H1 (cell line): ENCODE measurements at regions of chr6 and their contacts with region 1.

Region 1: GRCh38 chr6:10555625-10556309 is 34.6 kb downstream of the GCNT2 start:
- DNase-seq: peak; percentile 56 to 70
- H3K4me3 ChIP-seq: peak overlapping the region; percentile 81 to 96 (median 87)
- H3K27ac ChIP-seq: peak overlapping the region; percentile 83
- H3K4me1 ChIP-seq: peaks cover 2 to 12% (median 5%) of the 10 kb centered on the region in 4 experiments; a peak in 6 of 7 replicates
- H3K27me3 ChIP-seq: no peaks in the 10 kb centered on the region
- CTCF ChIP-seq: no peak
- EP300 ChIP-seq: no peak
- POLR2A ChIP-seq: peak; percentile 7 to 69; a peak in 2 of 3 replicates
- RAD21 ChIP-seq: no peak

Region 2: GRCh38 chr6:10338151-10338550 is 217.6 kb before region 1 on chr6:
- CTCF ChIA-PET with region 1: no interaction called
- POLR2A ChIA-PET with region 1: no interaction called
- DNase-seq: no peak
- H3K4me3 ChIP-seq: no peak overlapping the region
- H3K27ac ChIP-seq: no peak overlapping the region
- H3K4me1 ChIP-seq: no peaks in the 10 kb centered on the region
- H3K27me3 ChIP-seq: no peaks in the 10 kb centered on the region
- CTCF ChIP-seq: no peak
- EP300 ChIP-seq: no peak
- POLR2A ChIP-seq: no peak
- RAD21 ChIP-seq: no peak

Region 3: DNA sequence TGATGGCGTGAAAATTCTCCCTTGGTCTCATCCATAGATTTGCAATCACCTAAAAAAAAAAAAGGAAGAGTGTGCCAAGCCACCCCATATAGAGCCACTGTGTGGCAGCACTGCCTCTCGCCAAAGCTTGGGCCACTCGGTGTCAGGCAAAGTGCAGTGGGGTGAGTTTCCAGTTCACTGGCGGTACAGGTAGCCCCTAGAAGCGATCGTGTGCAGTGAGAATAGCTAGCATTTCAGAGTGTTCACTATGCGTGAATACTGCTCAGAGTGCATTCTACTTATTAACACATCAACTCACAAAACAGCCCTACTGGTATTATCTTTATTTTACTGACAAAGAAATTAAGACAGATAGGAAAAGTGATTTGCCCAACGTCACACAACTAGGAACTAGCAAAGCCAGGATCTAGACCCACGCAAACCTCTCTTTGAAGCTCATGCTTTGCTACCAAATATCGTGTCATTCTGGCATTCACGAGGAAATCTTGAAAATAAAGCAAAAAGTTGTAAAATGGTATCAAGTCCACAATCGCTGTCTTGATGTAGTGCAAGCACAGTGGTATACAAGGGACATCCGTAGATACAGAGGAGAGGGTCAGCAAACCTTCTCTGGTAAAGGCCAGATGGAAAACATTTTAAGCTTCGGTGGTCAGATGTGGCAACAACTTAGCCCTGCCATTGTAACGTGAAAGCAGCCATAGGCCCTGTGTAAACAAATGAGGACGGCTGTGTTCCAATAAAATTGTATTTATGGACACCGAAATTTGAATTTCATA is 45.0 kb before region 1 on chr6:
- CTCF ChIA-PET with region 1: interaction called, 15 read pairs
- POLR2A ChIA-PET with region 1: interaction called, 3 read pairs
- DNase-seq: peak in 1 of 2 experiments; percentile 62
- H3K4me3 ChIP-seq: no peak overlapping the region
- H3K27ac ChIP-seq: no peak overlapping the region
- H3K4me1 ChIP-seq: peaks cover 0 to 3% (median 0%) of the 10 kb centered on the region in 4 experiments; a peak in 2 of 7 replicates
- H3K27me3 ChIP-seq: no peaks in the 10 kb centered on the region
- CTCF ChIP-seq: peak; percentile 77 to 91 (median 88)
- EP300 ChIP-seq: 0 out of 3 replicates have a peak, but pooled peaks of 1 of the 2 experiments have one; percentile 53
- POLR2A ChIP-seq: no peak
- RAD21 ChIP-seq: peak; percentile 98

Region 4: DNA sequence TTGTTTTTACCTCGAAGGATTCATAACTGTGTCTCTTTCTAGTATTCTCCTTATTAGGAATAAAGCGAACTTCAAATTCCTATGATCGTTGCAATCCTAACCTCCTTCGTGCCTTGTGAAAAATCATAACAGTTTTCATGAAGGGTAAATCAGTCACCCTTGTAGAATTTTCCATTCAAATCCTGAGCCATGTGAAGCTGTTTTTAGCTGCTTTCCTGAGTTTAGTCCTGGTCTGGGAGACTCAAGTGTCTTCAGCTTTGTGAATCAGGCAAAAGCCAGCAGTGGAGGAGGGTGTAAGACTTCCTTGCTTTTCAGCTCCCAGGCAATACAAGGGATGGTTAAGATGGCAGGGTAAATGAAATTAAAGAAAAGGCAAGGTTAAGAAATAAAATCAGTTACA is 10.3 kb before region 1 on chr6:
- CTCF ChIA-PET with region 1: interaction called, 9 read pairs
- POLR2A ChIA-PET with region 1: interaction called, 18 read pairs
- DNase-seq: no peak
- H3K4me3 ChIP-seq: no peak overlapping the region
- H3K27ac ChIP-seq: no peak overlapping the region
- H3K4me1 ChIP-seq: peaks cover 0 to 5% (median 2%) of the 10 kb centered on the region in 4 experiments; a peak in 3 of 7 replicates
- H3K27me3 ChIP-seq: no peaks in the 10 kb centered on the region
- CTCF ChIP-seq: no peak
- EP300 ChIP-seq: no peak
- POLR2A ChIP-seq: no peak
- RAD21 ChIP-seq: no peak

Region 5: DNA sequence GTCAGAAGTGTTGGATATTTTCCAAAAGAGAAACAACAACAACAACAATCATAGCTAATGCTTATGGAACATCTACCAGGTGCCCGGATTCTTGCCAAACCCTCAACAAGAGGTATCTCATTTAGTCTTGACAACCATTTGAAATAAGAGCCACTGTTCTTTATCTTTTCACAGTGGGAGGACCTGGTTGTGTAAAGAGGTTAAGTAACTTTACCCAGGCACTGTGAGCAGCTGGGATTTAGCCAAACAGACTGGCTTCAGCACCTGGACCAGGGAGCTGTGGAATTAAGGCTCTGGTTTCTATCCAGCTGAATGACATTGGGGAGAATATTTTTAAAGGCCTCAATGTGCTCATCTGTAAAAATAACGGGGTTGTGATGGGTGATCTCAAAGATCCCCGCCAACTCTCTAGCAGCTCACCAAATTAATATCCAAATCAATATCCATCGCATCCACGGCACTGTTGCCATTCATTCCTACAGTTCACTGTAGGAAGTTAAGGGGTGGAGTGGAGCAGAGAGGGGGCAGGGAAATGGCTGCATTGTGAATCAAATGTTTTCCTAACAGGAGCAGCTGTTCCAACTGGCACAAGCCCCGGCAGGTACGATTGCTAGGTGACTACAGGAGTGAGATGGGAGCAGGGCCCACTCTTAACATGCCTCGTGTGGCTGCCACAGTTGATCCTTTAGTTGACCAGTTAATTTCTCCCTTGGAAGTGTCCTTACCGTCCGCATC is 27.2 kb after region 1 on chr6:
- CTCF ChIA-PET with region 1: interaction called, 10 read pairs
- POLR2A ChIA-PET with region 1: interaction called, 154 read pairs
- DNase-seq: no peak
- H3K4me3 ChIP-seq: peak overlapping the region in 3 of 4 experiments; percentile 7 to 49 (median 30); a peak in 5 of 8 replicates
- H3K27ac ChIP-seq: peak overlapping the region; percentile 79
- H3K4me1 ChIP-seq: peaks cover 24 to 57% (median 40%) of the 10 kb centered on the region in 4 experiments
- H3K27me3 ChIP-seq: no peaks in the 10 kb centered on the region
- CTCF ChIP-seq: no peak
- EP300 ChIP-seq: peak in 1 of 2 experiments; percentile 73; a peak in 1 of 3 replicates
- POLR2A ChIP-seq: peak in 1 of 2 experiments; percentile 58; a peak in 1 of 3 replicates
- RAD21 ChIP-seq: peak in 1 of 2 experiments; percentile 8; a peak in 1 of 4 replicates

Region 6: GRCh38 chr6:10694302-10695085 is 138.7 kb after region 1 on chr6 and contains the starts of genes C6orf52 and PAK1IP1:
- CTCF ChIA-PET with region 1: no interaction called
- POLR2A ChIA-PET with region 1: interaction called, 12 read pairs
- DNase-seq: peak; percentile 73 to 90
- H3K4me3 ChIP-seq: peak within 1 kb of the TSS; percentile 78 to 97 (median 92)
- H3K27ac ChIP-seq: peak within 1 kb of the TSS; percentile 97
- H3K4me1 ChIP-seq: peaks cover 0 to 3% (median 0%) of the 10 kb centered on the region in 4 experiments; a peak in 2 of 7 replicates
- H3K27me3 ChIP-seq: no peaks in the 10 kb centered on the region
- CTCF ChIP-seq: no peak
- EP300 ChIP-seq: peak in 1 of 2 experiments; percentile 52; a peak in 1 of 3 replicates
- POLR2A ChIP-seq: peak; percentile 73 to 88; a peak in 2 of 3 replicates
- RAD21 ChIP-seq: peak in 1 of 2 experiments; percentile 7; a peak in 1 of 4 replicates
- total RNA-seq, gene C6orf52: 1.1 and 1.5 TPM in 2 replicates
- total RNA-seq, gene PAK1IP1: 43.6 and 46.4 TPM in 2 replicates